H1 (cell line): ENCODE measurements at regions of chr4 and their contacts with region 1.

Region 1: GRCh38 chr4:77044461-77045150 is 31.2 kb downstream of the CCNI start:
- DNase-seq: no peak
- H3K4me3 ChIP-seq: no peak overlapping the region
- H3K27ac ChIP-seq: no peak overlapping the region
- H3K4me1 ChIP-seq: peaks cover 0 to 3% (median 0%) of the 10 kb centered on the region in 4 experiments; a peak in 2 of 7 replicates
- H3K27me3 ChIP-seq: no peaks in the 10 kb centered on the region
- CTCF ChIP-seq: peak in 2 of 3 experiments; percentile 35 to 50; a peak in 2 of 4 replicates
- EP300 ChIP-seq: no peak
- POLR2A ChIP-seq: no peak
- RAD21 ChIP-seq: peak; percentile 20 to 39

Region 2: GRCh38 chr4:77065382-77065781 is 20.8 kb after region 1 on chr4:
- CTCF ChIA-PET with region 1: interaction called, 35 read pairs
- POLR2A ChIA-PET with region 1: no interaction called
- DNase-seq: no peak
- H3K4me3 ChIP-seq: no peak overlapping the region
- H3K27ac ChIP-seq: no peak overlapping the region
- H3K4me1 ChIP-seq: no peaks in the 10 kb centered on the region
- H3K27me3 ChIP-seq: no peaks in the 10 kb centered on the region
- CTCF ChIP-seq: no peak
- EP300 ChIP-seq: no peak
- POLR2A ChIP-seq: no peak
- RAD21 ChIP-seq: no peak